ENCODE measurements at regions of chrX and their contacts with region 1.

Region 1: GRCh38 chrX:150898343-150899190 is at the start of gene CD99L2:
- DNase-seq: peak; percentile 93
- ATAC-seq: peak; percentile 95
- H3K4me3 Mint-ChIP-seq: peak within 1 kb of the TSS; percentile 74
- H3K27ac Mint-ChIP-seq: peak within 1 kb of the TSS; percentile 60
- H3K4me1 Mint-ChIP-seq: peaks cover 10% of the 10 kb centered on the region
- H3K27me3 Mint-ChIP-seq: no peaks in the 10 kb centered on the region
- total RNA-seq, gene CD99L2: 8.4 to 9.6 TPM

Region 2: DNA sequence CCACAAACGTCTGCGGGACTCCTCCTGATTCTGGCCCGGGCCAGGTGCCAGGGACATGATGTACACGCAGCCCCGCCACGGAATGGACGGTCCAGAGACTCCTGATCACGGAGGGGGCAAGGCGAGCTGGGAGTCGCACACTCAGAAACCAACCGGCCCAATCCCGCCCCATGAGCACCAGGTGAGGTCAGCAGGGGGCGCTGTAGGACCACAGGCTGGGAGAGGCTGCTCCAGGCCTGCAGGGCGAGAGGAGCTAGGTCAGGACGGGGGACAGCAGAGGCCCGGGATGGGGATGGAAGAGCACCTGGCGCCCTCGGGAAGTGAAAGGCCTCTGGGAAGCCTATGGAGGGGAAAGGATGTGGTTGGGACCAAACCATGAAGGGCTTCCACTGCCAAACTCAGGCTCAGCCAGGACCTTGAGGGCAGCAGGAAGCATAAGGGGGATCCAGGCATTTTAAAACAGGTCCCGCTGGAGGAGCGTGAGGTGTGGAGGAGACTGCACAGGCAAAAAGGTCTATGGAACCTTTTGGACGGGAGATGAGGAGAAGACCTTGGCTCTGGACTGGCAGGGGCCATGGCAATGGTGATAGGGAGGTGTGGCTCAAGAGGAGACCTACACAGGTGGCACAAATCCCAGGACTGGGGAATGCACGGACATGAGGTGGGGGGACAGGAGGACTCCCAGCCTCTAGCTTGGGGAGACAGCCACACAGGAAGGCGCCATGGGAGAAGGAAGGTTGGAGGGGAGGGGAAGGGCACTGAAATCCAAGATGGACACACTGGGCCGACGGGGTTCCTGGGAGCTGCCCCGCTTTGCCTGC is 126.2 kb before region 1 on chrX:
- CTCF ChIA-PET with region 1: no interaction called
- POLR2A ChIA-PET with region 1: no interaction called
- intact Hi-C with region 1: loop called in 1 of 2 experiments (anchors 5 kb)
- DNase-seq: peak; percentile 87
- ATAC-seq: peak; percentile 82
- H3K4me3 Mint-ChIP-seq: no peak overlapping the region
- H3K27ac Mint-ChIP-seq: no peak overlapping the region
- H3K4me1 Mint-ChIP-seq: peaks cover 6% of the 10 kb centered on the region
- H3K27me3 Mint-ChIP-seq: no peaks in the 10 kb centered on the region

Region 3: DNA sequence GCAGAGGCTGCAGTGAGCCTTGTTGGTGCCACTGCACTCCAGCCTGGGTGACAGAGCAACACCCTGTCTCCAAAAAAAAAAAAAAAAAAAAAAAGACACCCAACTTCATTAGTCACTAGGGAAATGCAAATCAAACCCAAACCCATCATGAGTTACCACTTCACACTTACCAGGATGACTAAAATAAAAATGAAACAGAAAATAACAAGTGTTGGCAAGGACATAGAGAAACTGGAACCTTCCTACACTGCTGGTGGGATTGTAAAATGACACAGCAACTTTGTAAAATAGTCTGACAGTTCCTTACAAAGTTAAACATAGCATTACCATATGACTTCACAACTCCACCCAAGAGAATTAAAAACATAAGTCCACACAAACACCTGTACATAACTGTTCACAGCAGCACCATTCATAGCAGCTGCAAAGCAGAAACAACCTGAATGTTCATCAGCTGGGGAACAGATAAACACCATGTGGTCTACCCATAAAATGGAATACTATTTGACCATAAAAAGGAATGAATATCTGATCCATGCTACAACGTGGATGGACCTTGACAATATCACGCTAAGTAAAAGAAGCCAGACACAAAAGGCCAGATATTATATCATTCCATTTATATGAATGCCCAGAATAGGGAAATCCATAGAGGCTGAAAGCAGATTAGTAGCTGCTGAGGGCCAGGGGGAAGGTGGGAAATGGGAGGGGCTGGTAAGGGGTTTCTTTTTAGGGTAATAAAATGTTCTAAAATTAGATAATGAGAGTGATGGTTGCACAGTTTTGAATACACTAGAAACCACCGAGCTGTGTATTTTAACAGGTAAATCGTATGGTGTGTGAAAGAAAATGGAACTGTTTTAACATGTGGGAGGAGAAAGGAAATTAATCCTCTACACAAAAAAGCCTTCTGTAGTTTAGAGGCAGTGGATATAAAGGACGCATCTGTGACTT is 18.4 kb before region 1 on chrX:
- CTCF ChIA-PET with region 1: interaction called, 6 read pairs
- POLR2A ChIA-PET with region 1: no interaction called
- intact Hi-C with region 1: loop called (anchors 1 kb)
- DNase-seq: no peak
- ATAC-seq: peak; percentile 94
- H3K4me3 Mint-ChIP-seq: peak overlapping the region; percentile 4
- H3K27ac Mint-ChIP-seq: peak overlapping the region; percentile 73
- H3K4me1 Mint-ChIP-seq: peaks cover 33% of the 10 kb centered on the region
- H3K27me3 Mint-ChIP-seq: no peaks in the 10 kb centered on the region

Region 4: DNA sequence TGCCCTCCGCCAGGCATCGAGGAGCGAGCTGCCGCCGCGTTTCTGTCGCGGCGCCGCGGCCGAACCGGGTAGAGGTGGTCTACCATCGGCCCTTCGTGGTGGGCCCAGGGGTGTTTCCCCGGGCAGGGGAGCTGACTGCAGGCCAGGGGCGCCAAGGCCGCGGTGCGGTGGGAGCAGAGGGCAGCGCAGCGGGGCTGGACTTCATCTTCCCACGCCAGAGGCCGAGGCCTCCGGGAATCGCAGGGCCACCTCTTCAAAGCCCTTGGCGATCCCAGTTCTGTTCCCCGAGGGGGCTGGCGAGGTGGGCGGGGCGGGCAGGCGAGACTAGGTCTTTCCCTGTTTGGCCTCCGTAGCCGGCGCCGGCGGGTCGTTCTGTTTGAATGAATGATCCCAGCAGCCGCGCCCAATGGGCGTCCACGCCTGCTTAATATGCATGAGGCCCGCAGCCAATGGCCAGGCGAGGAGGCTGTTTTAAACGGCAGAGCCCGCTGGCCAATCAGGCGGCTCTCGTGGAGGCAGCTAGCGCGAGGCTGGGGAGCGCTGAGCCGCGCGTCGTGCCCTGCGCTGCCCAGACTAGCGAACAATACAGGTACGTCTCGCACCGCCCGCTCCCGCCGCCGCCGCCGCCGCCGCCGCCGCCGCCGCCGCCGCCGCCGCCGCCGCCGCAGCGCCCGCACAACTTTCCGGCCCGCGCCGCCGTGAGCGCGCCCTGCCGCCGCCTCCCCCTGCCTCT is 84.4 kb after region 1 on chrX and contains the start of gene HMGB3:
- CTCF ChIA-PET with region 1: no interaction called
- POLR2A ChIA-PET with region 1: no interaction called
- intact Hi-C with region 1: loop called (anchors 1 to 2 kb)
- DNase-seq: peak; percentile 91
- ATAC-seq: peak; percentile 99
- H3K4me3 Mint-ChIP-seq: peak within 1 kb of the TSS; percentile 66
- H3K27ac Mint-ChIP-seq: no peak within 1 kb of the TSS
- H3K4me1 Mint-ChIP-seq: peaks cover 4% of the 10 kb centered on the region
- H3K27me3 Mint-ChIP-seq: peaks cover 16% of the 10 kb centered on the region
- total RNA-seq, gene HMGB3: 26.5 to 29.3 TPM

Region 5: DNA sequence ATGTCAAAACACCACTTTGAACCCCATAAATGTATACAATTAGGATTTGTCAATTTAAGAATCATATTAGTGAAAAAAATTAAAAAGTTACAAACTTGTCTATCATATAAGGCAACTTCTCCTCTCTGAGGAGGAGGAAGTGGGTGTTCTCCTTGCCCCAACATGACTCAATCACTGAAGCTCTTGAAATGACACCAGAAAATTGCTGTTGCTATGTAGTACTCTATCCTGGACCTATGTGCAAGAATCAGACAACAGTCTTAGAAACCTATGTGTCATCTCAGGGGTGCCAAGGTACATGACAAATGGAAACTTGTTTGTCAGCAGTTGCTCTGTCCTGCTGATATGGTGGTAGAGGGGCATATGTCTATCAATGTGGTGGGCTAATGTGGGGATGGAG is 132.3 kb after region 1 on chrX:
- CTCF ChIA-PET with region 1: no interaction called
- POLR2A ChIA-PET with region 1: no interaction called
- intact Hi-C with region 1: loop called in 1 of 2 experiments (anchors 2 kb)
- DNase-seq: peak; percentile 6
- ATAC-seq: peak; percentile 96
- H3K4me3 Mint-ChIP-seq: no peak overlapping the region
- H3K27ac Mint-ChIP-seq: peak overlapping the region; percentile 85
- H3K4me1 Mint-ChIP-seq: peaks cover 14% of the 10 kb centered on the region
- H3K27me3 Mint-ChIP-seq: peaks cover 6% of the 10 kb centered on the region

Region 6: GRCh38 chrX:151396825-151397740 is 498.5 kb after region 1 on chrX and contains the start of gene VMA21:
- CTCF ChIA-PET with region 1: no interaction called
- POLR2A ChIA-PET with region 1: no interaction called
- intact Hi-C with region 1: loop called in 1 of 2 experiments (anchors 1 kb)
- DNase-seq: peak; percentile 90
- ATAC-seq: peak; percentile 80
- H3K4me3 Mint-ChIP-seq: peak within 1 kb of the TSS; percentile 84
- H3K27ac Mint-ChIP-seq: peak within 1 kb of the TSS; percentile 94
- H3K4me1 Mint-ChIP-seq: peaks cover 49% of the 10 kb centered on the region
- H3K27me3 Mint-ChIP-seq: no peaks in the 10 kb centered on the region
- total RNA-seq, gene VMA21: 42.1 to 43.0 TPM

Region 7: DNA sequence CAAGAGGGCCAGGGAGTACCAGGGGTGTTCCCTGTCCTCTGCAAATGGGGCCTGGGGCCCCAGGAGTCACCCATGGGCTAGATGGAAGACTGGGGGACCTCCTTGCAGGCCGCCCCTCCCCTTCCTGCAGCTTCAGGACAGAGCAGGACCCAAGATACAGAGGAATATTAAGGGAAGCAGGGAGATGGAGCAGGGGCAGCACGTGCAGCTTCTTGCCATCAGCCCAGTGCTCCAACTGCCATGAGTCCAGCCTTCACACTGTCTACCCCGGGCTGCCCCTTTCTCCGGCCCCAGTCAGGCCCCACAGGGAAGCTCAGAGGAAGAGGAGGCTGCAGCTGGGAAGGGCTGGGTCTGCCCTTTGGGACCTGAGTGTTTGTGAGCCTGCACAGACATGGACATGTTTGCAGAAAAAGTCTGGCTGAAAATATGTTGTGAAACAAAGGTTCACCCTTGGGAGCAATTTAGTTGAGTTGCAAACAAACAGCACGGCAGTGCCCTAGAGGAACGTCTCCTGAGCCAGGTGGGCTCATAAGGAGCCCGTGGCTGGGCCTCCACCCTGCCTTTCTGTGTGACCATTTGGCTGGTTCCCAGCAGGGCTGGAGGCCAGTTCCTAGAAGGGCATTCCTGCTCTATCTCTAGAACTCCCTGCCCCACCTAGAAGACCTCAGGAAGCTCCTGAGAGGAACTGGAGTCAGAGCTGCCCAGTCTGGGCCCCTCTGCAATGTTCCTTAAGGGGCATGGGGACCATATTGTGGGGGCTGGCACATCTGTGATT is 826.2 kb after region 1 on chrX:
- CTCF ChIA-PET with region 1: no interaction called
- POLR2A ChIA-PET with region 1: no interaction called
- intact Hi-C with region 1: no loop called
- DNase-seq: no peak
- ATAC-seq: no peak
- H3K4me3 Mint-ChIP-seq: no peak overlapping the region
- H3K27ac Mint-ChIP-seq: no peak overlapping the region
- H3K4me1 Mint-ChIP-seq: no peaks in the 10 kb centered on the region
- H3K27me3 Mint-ChIP-seq: no peaks in the 10 kb centered on the region

Region 8: DNA sequence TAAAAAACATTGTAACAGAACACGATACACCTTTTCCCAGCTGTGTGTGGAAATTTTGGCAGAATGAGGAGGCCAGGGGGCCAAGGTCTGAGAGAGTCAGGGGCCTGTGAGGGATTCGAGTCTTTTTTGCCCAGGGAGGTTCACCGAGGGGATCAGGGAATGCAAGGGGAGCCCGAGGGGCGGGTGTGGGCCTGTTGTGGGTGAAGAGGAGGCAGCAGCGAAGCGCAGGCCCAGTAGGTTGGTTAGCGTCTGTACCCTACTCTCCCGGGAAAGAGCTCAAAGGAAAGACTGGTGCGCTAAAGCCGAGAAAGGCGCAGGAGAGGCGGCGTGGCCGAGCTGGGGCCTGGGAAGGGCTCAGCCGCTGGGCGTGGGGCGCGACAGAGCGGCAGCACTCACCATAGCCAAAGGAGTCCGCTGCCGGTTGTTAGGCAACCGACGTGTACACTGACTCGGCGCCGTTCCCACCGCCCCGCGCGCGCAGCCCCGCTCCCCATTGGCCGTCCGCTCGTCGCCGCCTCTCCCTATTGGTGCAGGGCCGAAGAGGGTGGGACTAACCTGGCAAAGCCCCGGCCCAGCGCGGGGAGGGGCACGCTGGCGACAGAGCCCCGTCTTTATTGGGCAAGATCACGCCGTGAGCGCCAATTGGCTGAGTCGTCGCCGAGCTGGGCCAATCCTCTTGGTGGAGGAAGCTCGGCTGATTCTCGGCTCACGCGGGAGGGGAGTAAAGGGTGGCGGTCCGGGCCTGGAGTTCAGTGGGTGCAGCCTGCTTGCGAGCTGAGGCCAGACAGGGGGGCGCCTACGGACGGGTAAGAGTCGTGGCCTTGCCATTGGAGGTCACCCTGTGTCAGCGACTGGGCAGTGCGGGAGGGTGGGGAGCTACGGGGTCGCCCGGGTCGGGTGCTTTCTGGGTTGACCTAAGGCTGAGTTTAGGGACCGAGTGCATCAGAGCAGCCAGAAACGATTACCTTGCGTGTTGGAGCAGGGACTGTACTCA is 1932.0 kb after region 1 on chrX and contains the starts of genes CETN2 and NSDHL:
- CTCF ChIA-PET with region 1: no interaction called
- POLR2A ChIA-PET with region 1: no interaction called
- intact Hi-C with region 1: loop called in 1 of 2 experiments (anchors 2 kb)
- DNase-seq: peak; percentile 96
- ATAC-seq: peak; percentile 99
- H3K4me3 Mint-ChIP-seq: peak within 1 kb of the TSS; percentile 83
- H3K27ac Mint-ChIP-seq: peak within 1 kb of the TSS; percentile 78
- H3K4me1 Mint-ChIP-seq: peaks cover 19% of the 10 kb centered on the region
- H3K27me3 Mint-ChIP-seq: no peaks in the 10 kb centered on the region
- total RNA-seq, gene CETN2: 11.2 to 13.1 TPM
- total RNA-seq, gene NSDHL: 20.0 to 20.6 TPM